ENCODE measurements at regions of chr1 and their contacts with region 1.

Region 1: GRCh38 chr1:16181887-16182719 is 26.2 kb upstream of the EPHA2 start:
- DNase-seq: peak; percentile 96
- H3K4me3 ChIP-seq: no peak overlapping the region
- H3K27ac ChIP-seq: peak overlapping the region; percentile 94
- H3K4me1 ChIP-seq: peaks cover 30% of the 10 kb centered on the region
- H3K27me3 ChIP-seq: no peaks in the 10 kb centered on the region
- CTCF ChIP-seq: no peak
- POLR2A ChIP-seq: peak; percentile 85

Region 2: GRCh38 chr1:15640667-15641066 is 541.4 kb before region 1 on chr1:
- CTCF ChIA-PET with region 1: no interaction called
- POLR2A ChIA-PET with region 1: no interaction called
- dilution Hi-C with region 1: no loop called
- intact Hi-C with region 1: no loop called
- DNase-seq: peak; percentile 4
- H3K4me3 ChIP-seq: no peak overlapping the region
- H3K27ac ChIP-seq: no peak overlapping the region
- H3K4me1 ChIP-seq: peaks cover 5% of the 10 kb centered on the region
- H3K27me3 ChIP-seq: no peaks in the 10 kb centered on the region
- CTCF ChIP-seq: no peak
- POLR2A ChIP-seq: no peak

Region 3: DNA sequence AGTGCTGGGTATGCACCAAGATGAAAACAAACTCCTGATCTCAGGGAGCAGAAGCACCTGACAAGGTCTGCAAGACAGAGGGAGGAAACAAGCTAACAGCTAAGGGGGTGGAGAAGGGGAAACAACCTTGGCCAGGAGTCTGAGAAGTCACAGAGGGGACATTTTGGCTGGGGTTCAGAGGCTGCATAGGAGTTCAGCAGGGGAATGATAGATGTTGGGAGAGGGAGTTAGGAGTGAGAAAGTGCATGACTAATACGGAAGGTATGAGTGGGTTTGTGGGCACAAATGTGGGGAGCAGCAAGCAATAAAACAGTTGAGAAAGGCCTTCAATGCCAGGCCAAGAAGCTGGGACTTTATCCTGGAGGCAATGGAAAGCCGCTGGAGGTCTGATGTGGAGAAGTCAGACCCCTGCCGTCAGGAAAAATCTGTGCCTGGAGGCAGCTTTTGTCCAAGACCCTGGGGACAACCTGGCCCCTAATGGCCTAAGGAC is 42.6 kb before region 1 on chr1:
- CTCF ChIA-PET with region 1: interaction called, 28 read pairs
- POLR2A ChIA-PET with region 1: interaction called, 7 read pairs
- dilution Hi-C with region 1: no loop called
- intact Hi-C with region 1: loop called (anchors 1 kb)
- DNase-seq: peak; percentile 60
- H3K4me3 ChIP-seq: no peak overlapping the region
- H3K27ac ChIP-seq: peak overlapping the region; percentile 86
- H3K4me1 ChIP-seq: peaks cover 63% of the 10 kb centered on the region
- H3K27me3 ChIP-seq: no peaks in the 10 kb centered on the region
- CTCF ChIP-seq: no peak
- POLR2A ChIP-seq: peak; percentile 50

Region 4: DNA sequence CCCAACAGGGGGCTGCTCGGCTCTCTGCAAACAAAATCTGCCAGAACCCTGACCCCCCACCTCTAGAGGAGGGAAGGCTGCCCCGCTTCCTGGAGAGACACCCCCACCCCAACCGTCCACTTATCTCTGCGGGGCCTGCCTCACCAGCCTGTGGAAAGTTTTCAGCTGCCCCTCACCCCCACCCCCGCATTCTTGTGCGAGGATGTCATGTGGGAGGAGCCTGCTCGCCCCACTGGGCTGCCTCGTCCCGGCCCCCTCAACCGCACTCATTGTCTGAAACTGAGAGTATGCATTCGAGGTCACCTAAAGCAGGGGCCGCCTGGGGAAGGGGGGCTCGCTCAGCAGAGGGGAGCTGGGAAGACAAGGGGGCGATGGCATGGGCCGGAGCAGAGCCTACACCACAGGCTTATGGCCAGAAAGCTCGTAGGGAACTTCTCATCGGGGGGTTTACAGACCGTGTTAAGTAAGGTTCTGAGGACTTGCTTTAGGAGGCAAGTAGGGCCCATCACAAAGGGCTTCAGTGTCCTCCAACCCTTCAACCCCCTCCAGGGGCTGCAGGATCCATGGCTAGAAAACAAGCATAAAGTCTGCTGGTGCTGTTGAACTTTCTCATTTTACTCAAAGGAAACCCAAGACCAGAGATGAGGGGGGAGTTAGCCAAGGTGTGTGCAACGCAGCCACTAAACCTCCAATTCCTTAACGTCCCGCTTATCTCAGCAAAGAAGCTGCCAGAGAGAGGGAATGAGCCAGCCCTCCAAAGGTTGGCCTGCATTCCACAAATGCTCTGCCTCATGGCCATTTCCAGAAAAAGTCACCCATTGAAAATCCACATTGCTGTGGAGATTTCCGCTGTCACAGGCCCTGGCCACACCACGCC is 35.6 kb before region 1 on chr1:
- CTCF ChIA-PET with region 1: interaction called, 79 read pairs
- POLR2A ChIA-PET with region 1: interaction called, 7 read pairs
- dilution Hi-C with region 1: no loop called
- intact Hi-C with region 1: loop called (anchors 1 kb)
- DNase-seq: peak; percentile 93
- H3K4me3 ChIP-seq: peak overlapping the region in 2 of 3 experiments; percentile 14 to 23
- H3K27ac ChIP-seq: peak overlapping the region; percentile 99
- H3K4me1 ChIP-seq: peaks cover 97% of the 10 kb centered on the region
- H3K27me3 ChIP-seq: no peaks in the 10 kb centered on the region
- CTCF ChIP-seq: no peak
- POLR2A ChIP-seq: peak; percentile 55

Region 5: DNA sequence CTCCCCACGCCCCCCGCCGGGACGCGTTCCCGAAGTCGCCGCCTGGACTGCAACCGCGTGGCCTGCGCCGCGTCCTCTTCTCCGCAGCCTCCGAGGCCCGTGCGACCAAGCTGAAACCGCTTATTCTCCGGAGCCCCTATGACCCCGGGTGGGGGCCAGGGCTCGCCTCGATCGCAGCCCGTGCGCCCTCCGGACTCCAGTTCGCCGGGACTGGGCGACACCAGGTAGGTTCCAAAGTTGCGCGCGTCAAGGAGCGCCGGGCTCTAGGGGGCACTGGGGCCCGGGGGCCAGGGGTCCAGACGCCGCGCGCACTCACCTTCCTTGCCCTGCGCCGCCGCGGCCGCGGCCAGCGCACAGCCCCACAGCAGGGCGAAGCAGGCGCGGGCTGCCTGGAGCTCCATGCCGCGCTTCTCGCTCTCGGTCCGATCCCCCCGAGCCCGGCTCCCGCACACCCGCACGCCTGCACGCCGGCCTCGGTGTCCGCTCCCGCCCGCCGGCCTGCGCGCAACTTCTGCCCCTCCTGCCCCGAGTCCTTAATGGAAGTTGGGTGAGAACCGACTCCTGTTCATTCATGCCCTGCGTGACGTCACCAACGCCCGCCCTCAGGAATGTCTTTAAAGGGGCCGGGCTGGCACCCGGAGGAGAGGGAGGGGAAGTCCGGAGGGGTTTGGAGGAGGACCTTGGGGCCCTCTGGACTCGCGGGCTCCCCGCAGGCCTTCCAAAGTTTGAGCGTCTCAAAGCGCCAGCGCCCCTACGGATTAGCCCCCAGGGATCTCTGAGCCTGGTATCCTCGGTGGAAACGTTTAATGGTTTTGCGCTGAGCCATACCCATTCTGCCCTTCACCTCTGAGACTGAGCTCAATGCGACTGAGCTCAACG is 26.3 kb before region 1 on chr1 and contains the start of gene EPHA2:
- CTCF ChIA-PET with region 1: interaction called, 79 read pairs
- POLR2A ChIA-PET with region 1: interaction called, 17 read pairs
- dilution Hi-C with region 1: no loop called
- intact Hi-C with region 1: loop called (anchors 1 kb)
- DNase-seq: peak; percentile 90
- H3K4me3 ChIP-seq: peak within 1 kb of the TSS; percentile 65 to 88 (median 87)
- H3K27ac ChIP-seq: peak within 1 kb of the TSS; percentile 84
- H3K4me1 ChIP-seq: peaks cover 42% of the 10 kb centered on the region
- H3K27me3 ChIP-seq: no peaks in the 10 kb centered on the region
- CTCF ChIP-seq: no peak
- POLR2A ChIP-seq: peak; percentile 99
- total RNA-seq, gene EPHA2: 125 and 141 TPM in 2 replicates

Region 6: GRCh38 chr1:16164213-16165072 is 17.7 kb before region 1 on chr1:
- CTCF ChIA-PET with region 1: interaction called, 8 read pairs
- POLR2A ChIA-PET with region 1: no interaction called
- dilution Hi-C with region 1: no loop called
- intact Hi-C with region 1: loop called (anchors 1 kb)
- DNase-seq: peak; percentile 88
- H3K4me3 ChIP-seq: no peak overlapping the region
- H3K27ac ChIP-seq: peak overlapping the region; percentile 68
- H3K4me1 ChIP-seq: peaks cover 15% of the 10 kb centered on the region
- H3K27me3 ChIP-seq: no peaks in the 10 kb centered on the region
- CTCF ChIP-seq: no peak
- POLR2A ChIP-seq: no peak